HepG2 (cell line): ENCODE measurements at regions of chrX and their contacts with region 1.

Region 1: GRCh38 chrX:108299101-108299591 is 139.1 kb downstream of the COL4A6 start:
- DNase-seq: peak; percentile 66
- ATAC-seq: peak; percentile 57
- H3K4me3 ChIP-seq: peak overlapping the region; percentile 49 to 71 (median 51); a peak in 4 of 6 replicates
- H3K27ac ChIP-seq: peak overlapping the region; percentile 92
- H3K4me1 ChIP-seq: peaks cover 34% of the 10 kb centered on the region
- H3K27me3 ChIP-seq: no peaks in the 10 kb centered on the region
- CTCF ChIP-seq: no peak
- EP300 ChIP-seq: peak in 1 of 2 experiments; percentile 60; a peak in 2 of 4 replicates
- POLR2A ChIP-seq: no peak
- RAD21 ChIP-seq: no peak

Region 2: GRCh38 chrX:108245459-108245858 is 53.7 kb before region 1 on chrX:
- CTCF ChIA-PET with region 1: no interaction called
- POLR2A ChIA-PET with region 1: interaction called, 7 read pairs
- in situ Hi-C with region 1: no loop called
- intact Hi-C with region 1: loop called (anchors 5 kb)
- DNase-seq: no peak
- ATAC-seq: peak; percentile 59
- H3K4me3 ChIP-seq: no peak overlapping the region
- H3K27ac ChIP-seq: peak overlapping the region; percentile 17
- H3K4me1 ChIP-seq: peaks cover 62% of the 10 kb centered on the region
- H3K27me3 ChIP-seq: no peaks in the 10 kb centered on the region
- CTCF ChIP-seq: peak; percentile 27; the same call in 1 of the 2 replicates
- EP300 ChIP-seq: no peak
- POLR2A ChIP-seq: no peak
- RAD21 ChIP-seq: no peak

Region 3: GRCh38 chrX:108261549-108262203 is 37.5 kb before region 1 on chrX:
- CTCF ChIA-PET with region 1: no interaction called
- POLR2A ChIA-PET with region 1: interaction called, 10 read pairs
- in situ Hi-C with region 1: no loop called
- intact Hi-C with region 1: loop called (anchors 5 kb)
- DNase-seq: peak; percentile 65
- ATAC-seq: peak; percentile 70
- H3K4me3 ChIP-seq: no peak overlapping the region; a peak in 1 of 6 replicates
- H3K27ac ChIP-seq: peak overlapping the region; percentile 60
- H3K4me1 ChIP-seq: peaks cover 56% of the 10 kb centered on the region
- H3K27me3 ChIP-seq: no peaks in the 10 kb centered on the region
- CTCF ChIP-seq: no peak
- EP300 ChIP-seq: peak in 1 of 2 experiments; percentile 67; a peak in 2 of 4 replicates
- POLR2A ChIP-seq: no peak
- RAD21 ChIP-seq: no peak